ACHN (cell line): ENCODE measurements at regions of chr6 and their contacts with region 1.

Region 1: GRCh38 chr6:109705258-109705657 is 14.2 kb downstream of the FIG4 start:
- DNase-seq: peak; percentile 80

Region 2: DNA sequence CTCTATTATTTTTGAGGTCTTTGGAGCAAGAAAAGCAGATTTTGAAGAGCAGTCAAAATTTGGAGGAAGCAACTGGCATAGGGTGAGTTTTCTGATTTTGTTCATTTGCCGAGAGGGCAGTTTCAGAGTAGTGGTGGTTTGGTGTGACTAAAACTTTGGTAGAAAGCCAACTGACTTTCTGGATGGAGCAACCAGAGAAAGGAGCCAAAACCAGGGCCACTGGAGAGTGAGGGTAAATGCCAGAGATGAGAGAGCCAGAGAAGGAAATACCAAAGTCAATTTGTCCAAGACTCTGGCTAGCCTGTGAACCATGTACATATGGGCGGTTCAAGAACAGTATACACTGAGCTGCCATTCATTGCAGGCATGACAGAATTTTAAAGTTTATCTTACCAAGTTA is 181.8 kb before region 1 on chr6:
- in situ Hi-C with region 1: no loop called
- DNase-seq: no peak

Region 3: GRCh38 chr6:110039364-110039980 is 334.2 kb after region 1 on chr6:
- in situ Hi-C with region 1: loop called (anchors 25 kb)
- DNase-seq: peak; percentile 80